K562 (cell line): ENCODE measurements at regions of chr1 and their contacts with region 1.

Region 1: DNA sequence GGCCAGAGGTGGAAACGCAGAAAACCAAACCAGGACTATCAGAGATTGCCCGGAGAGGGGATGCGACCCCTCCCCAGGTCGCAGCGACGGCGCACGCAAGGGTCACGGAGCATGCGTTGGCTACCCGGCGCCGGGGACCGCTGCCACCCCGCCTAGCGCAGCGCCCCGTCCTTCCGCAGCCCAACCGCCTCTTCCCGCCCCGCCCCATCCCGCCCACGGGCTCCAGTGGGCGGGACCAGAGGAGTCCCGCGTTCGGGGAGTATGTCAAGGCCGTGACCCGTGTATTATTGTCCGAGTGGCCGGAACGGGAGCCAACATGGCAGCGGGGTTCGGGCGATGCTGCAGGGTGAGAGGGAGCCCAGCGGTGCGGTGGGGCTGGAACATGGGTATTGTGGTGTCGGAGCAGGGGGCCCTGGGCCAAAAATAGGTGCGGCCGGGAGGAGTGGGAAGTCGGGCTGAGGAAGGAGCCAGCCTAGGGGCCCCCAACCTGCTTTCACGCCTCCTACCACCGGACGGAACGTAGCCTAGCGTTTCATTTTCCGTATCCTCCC is at the start of gene ACADM:
- DNase-seq: peak; percentile 92 to 96 (median 92)
- ATAC-seq: peak; percentile 86
- H3K4me3 ChIP-seq: peak within 1 kb of the TSS; percentile 77
- H3K27ac ChIP-seq: peak within 1 kb of the TSS; percentile 95
- H3K4me1 ChIP-seq: peaks cover 0 to 10% of the 10 kb centered on the region in 2 experiments; a peak in 3 of 5 replicates
- H3K27me3 ChIP-seq: no peaks in the 10 kb centered on the region
- CTCF ChIP-seq: no peak; a peak in 1 of 6 replicates
- EP300 ChIP-seq: peak; percentile 48; the same call in 1 of the 2 replicates
- POLR2A ChIP-seq: peak; percentile 95
- RAD21 ChIP-seq: no peak
- polyA plus RNA-seq, gene ACADM: 103 to 119 TPM

Region 2: GRCh38 chr1:75396745-75397144 is 327.8 kb before region 1 on chr1:
- CTCF ChIA-PET with region 1: no interaction called
- POLR2A ChIA-PET with region 1: no interaction called
- in situ Hi-C with region 1: no loop called
- intact Hi-C with region 1: no loop called
- DNase-seq: no peak
- ATAC-seq: no peak
- H3K4me3 ChIP-seq: no peak overlapping the region
- H3K27ac ChIP-seq: no peak overlapping the region
- H3K4me1 ChIP-seq: peaks cover 0 to 5% of the 10 kb centered on the region in 2 experiments; a peak in 1 of 5 replicates
- H3K27me3 ChIP-seq: no peaks in the 10 kb centered on the region
- CTCF ChIP-seq: no peak
- EP300 ChIP-seq: no peak
- POLR2A ChIP-seq: no peak
- RAD21 ChIP-seq: no peak

Region 3: GRCh38 chr1:75472971-75473603 is 251.5 kb before region 1 on chr1:
- CTCF ChIA-PET with region 1: no interaction called
- POLR2A ChIA-PET with region 1: no interaction called
- in situ Hi-C with region 1: no loop called
- intact Hi-C with region 1: no loop called
- DNase-seq: peak in 1 of 4 experiments; percentile 12
- ATAC-seq: no peak
- H3K4me3 ChIP-seq: no peak overlapping the region
- H3K27ac ChIP-seq: peak overlapping the region; percentile 74
- H3K4me1 ChIP-seq: peaks cover 18 to 42% of the 10 kb centered on the region in 2 experiments
- H3K27me3 ChIP-seq: no peaks in the 10 kb centered on the region
- CTCF ChIP-seq: no peak
- EP300 ChIP-seq: no peak
- POLR2A ChIP-seq: no peak
- RAD21 ChIP-seq: no peak

Region 4: GRCh38 chr1:75641332-75641731 is 83.2 kb before region 1 on chr1:
- CTCF ChIA-PET with region 1: no interaction called
- POLR2A ChIA-PET with region 1: no interaction called
- in situ Hi-C with region 1: no loop called
- intact Hi-C with region 1: loop called (anchors 1 kb)
- DNase-seq: no peak
- ATAC-seq: no peak
- H3K4me3 ChIP-seq: no peak overlapping the region
- H3K27ac ChIP-seq: no peak overlapping the region
- H3K4me1 ChIP-seq: peaks cover 0 to 5% of the 10 kb centered on the region in 2 experiments; a peak in 2 of 5 replicates
- H3K27me3 ChIP-seq: no peaks in the 10 kb centered on the region
- CTCF ChIP-seq: no peak
- EP300 ChIP-seq: no peak
- POLR2A ChIP-seq: no peak
- RAD21 ChIP-seq: no peak

Region 5: GRCh38 chr1:75672528-75673393 is 51.8 kb before region 1 on chr1:
- CTCF ChIA-PET with region 1: no interaction called
- POLR2A ChIA-PET with region 1: interaction called, 4 read pairs
- in situ Hi-C with region 1: no loop called
- intact Hi-C with region 1: loop called (anchors 2 kb)
- DNase-seq: peak; percentile 50 to 92 (median 66)
- ATAC-seq: peak; percentile 89
- H3K4me3 ChIP-seq: no peak overlapping the region
- H3K27ac ChIP-seq: peak overlapping the region; percentile 91
- H3K4me1 ChIP-seq: peaks cover 7 to 36% of the 10 kb centered on the region in 2 experiments; a peak in 4 of 5 replicates
- H3K27me3 ChIP-seq: no peaks in the 10 kb centered on the region
- CTCF ChIP-seq: no peak
- EP300 ChIP-seq: peak; percentile 69
- POLR2A ChIP-seq: peak; percentile 52
- RAD21 ChIP-seq: no peak